ENCODE measurements at regions of chr19 and their contacts with region 1.

Region 1: DNA sequence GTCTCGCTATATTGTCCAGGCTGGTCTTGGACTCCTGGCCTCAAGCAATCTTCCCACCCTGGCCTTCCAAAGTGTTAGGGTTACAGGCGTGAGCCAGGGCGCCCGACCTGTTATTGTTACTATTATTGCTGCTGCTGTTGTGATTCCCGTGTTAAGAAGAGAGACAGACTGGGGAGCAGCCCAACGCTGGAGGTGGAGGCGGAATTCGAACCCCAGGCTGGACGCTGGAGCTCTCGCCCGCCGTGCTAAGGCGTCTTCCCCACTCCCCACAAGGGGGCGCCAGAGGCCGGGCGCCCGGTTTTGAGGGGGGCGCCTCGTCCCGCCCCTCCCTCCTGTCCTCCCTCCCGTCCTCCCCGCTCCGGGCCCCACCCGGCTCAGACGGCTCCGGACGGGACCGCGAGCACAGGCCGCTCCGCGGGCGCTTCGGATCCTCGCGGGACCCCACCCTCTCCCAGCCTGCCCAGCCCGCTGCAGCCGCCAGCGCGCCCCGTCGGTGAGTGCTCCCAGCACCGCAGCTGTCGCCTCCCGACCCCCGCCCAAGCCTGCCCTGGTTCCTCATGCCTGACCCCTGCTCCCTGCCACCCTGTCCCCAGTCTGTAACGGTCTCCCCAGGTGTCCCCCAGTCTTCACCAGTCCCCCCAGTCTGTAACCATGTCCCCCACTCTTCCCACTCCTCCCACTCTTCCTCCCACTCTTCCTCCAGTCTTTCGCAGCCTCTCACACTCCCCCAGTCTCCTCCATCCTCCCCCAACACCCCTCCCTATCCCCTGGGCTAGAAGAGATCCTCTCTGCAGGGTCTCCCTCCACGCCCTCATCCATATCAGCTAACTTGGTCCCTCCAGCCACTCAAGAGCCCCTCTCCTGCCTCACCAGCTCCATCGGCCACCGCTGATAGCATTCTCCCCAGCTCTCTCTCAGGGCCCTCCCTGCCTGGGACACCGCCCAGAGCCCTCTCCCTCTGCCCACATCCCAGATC is at the start of gene EHD2:
- DNase-seq: peak; percentile 86
- H3K4me3 Mint-ChIP-seq: peak within 1 kb of the TSS; percentile 80
- H3K27ac Mint-ChIP-seq: peak within 1 kb of the TSS; percentile 82
- H3K4me1 Mint-ChIP-seq: peaks cover 23% of the 10 kb centered on the region
- H3K27me3 Mint-ChIP-seq: no peaks in the 10 kb centered on the region
- CTCF ChIP-seq: peak; percentile 99
- total RNA-seq, gene EHD2: 52.3 and 71.5 TPM in 2 replicates

Region 2: GRCh38 chr19:47573071-47574026 is 140.0 kb before region 1 on chr19 and contains the start of gene ZNF541:
- CTCF ChIA-PET with region 1: no interaction called
- intact Hi-C with region 1: no loop called
- DNase-seq: no peak
- H3K4me3 Mint-ChIP-seq: no peak within 1 kb of the TSS
- H3K27ac Mint-ChIP-seq: no peak within 1 kb of the TSS
- H3K4me1 Mint-ChIP-seq: no peaks in the 10 kb centered on the region
- H3K27me3 Mint-ChIP-seq: peaks cover 19% of the 10 kb centered on the region
- CTCF ChIP-seq: no peak
- total RNA-seq, gene ZNF541: not detected in 2 replicates

Region 3: DNA sequence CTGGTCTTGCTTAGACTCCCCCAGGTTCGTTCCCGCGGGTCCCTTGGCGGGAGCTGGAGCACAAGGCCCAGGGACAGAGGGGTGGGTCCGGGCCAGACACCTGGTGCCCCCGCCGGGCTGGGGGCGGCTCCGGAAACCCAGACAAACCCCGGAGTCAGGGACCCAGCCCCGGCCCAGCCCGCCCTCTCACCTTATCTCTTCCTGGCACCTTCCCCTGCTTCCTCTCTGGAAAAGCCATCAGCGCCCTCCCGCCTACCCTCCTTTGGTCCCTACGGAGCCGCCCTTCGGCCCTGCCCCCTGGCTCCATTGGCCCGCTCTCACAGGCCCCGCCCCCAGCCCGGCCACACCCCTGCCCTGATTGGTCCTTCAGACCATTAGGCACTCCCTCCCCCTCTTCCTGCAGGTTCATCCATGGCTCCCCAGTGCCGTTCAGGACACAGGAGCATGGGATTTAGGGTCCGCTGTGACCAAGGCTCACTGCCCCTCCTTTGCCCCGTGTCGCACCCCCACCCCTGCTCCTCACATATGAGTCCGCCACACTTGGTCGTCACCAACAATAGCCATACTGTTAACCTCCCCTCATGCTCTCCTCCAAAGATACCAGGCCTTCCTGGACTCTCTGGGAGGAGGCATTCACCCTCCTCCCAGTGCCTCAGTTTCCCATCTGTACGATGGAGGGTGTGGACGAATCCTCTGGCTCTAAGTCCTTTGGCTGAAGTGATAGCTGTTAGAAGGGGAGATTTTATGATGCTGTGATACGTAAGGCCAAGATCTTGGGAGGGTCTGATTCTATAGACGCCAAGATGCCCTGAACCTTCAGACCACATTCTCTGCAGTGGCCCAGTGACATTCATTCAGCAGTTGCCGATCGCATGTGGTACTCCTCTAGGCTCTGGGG is 16.9 kb after region 1 on chr19:
- CTCF ChIA-PET with region 1: interaction called, 16 read pairs
- intact Hi-C with region 1: no loop called
- DNase-seq: peak; percentile 96
- H3K4me3 Mint-ChIP-seq: peak overlapping the region; percentile 85
- H3K27ac Mint-ChIP-seq: peak overlapping the region; percentile 96
- H3K4me1 Mint-ChIP-seq: peaks cover 45% of the 10 kb centered on the region
- H3K27me3 Mint-ChIP-seq: no peaks in the 10 kb centered on the region
- CTCF ChIP-seq: no peak

Region 4: GRCh38 chr19:47745010-47745901 is 31.9 kb after region 1 on chr19 and contains the start of gene NOP53:
- CTCF ChIA-PET with region 1: interaction called, 34 read pairs
- intact Hi-C with region 1: loop called (anchors 2 kb)
- DNase-seq: peak; percentile 96
- H3K4me3 Mint-ChIP-seq: peak within 1 kb of the TSS; percentile 92
- H3K27ac Mint-ChIP-seq: peak within 1 kb of the TSS; percentile 98
- H3K4me1 Mint-ChIP-seq: peaks cover 24% of the 10 kb centered on the region
- H3K27me3 Mint-ChIP-seq: no peaks in the 10 kb centered on the region
- CTCF ChIP-seq: no peak
- total RNA-seq, gene NOP53: 193 and 222 TPM in 2 replicates

Region 5: GRCh38 chr19:47790398-47790814 is 77.1 kb after region 1 on chr19:
- CTCF ChIA-PET with region 1: no interaction called
- intact Hi-C with region 1: no loop called
- DNase-seq: peak; percentile 96
- H3K4me3 Mint-ChIP-seq: peak overlapping the region; percentile 53
- H3K27ac Mint-ChIP-seq: peak overlapping the region; percentile 72
- H3K4me1 Mint-ChIP-seq: peaks cover 13% of the 10 kb centered on the region
- H3K27me3 Mint-ChIP-seq: no peaks in the 10 kb centered on the region
- CTCF ChIP-seq: peak; percentile 97

Region 6: GRCh38 chr19:47863514-47863936 is 150.2 kb after region 1 on chr19:
- CTCF ChIA-PET with region 1: interaction called, 5 read pairs
- intact Hi-C with region 1: loop called (anchors 2 kb)
- DNase-seq: peak; percentile 97
- H3K4me3 Mint-ChIP-seq: no peak overlapping the region
- H3K27ac Mint-ChIP-seq: no peak overlapping the region
- H3K4me1 Mint-ChIP-seq: peaks cover 13% of the 10 kb centered on the region
- H3K27me3 Mint-ChIP-seq: peaks cover 32% of the 10 kb centered on the region
- CTCF ChIP-seq: peak; percentile 96